ENCODE measurements at regions of chr4 and their contacts with region 1.

Region 1: DNA sequence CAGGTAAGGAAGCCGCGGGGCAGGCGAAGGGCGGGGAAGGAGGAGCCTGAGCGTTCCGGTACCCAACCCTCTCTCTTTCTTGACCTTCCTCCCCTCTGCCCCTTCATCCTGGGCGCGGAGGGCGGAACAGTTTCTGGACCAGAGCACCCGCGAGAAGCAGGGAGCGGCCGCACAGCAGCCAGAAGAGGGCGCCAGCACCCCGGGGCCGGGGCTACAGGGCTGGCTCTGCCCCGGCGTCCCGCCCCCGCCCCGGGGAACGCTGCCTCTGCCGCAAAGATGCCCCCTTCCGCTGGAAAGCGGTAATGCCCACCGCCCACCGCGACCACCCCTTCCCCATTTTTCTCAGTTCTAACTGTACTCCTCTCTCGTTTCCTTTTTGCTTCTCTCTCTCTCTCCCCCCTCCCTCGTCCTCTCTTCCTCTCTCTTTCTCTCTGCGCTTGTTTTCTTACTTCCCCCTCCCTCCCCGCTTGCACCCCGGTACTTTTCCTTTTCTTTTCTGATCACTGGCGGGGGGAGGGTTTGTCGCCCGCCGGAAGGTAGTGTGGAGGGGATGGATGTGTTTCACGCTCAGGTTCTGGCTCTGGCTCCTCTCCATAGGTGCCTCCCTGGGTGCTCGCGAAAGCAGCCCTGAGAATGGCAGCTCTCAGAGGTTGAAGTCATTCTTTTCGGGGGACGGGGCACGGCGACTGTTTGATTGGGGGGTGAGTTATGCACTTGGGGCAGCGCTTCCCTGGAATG is 13.1 kb upstream of the PRDM8 start:
- DNase-seq: peak; percentile 93
- ATAC-seq: peak; percentile 81
- H3K4me3 Mint-ChIP-seq: peak overlapping the region; percentile 97
- H3K27ac Mint-ChIP-seq: peak overlapping the region; percentile 95
- H3K4me1 Mint-ChIP-seq: peaks cover 59% of the 10 kb centered on the region
- H3K27me3 Mint-ChIP-seq: no peaks in the 10 kb centered on the region
- CTCF ChIP-seq: peak; percentile 97

Region 2: DNA sequence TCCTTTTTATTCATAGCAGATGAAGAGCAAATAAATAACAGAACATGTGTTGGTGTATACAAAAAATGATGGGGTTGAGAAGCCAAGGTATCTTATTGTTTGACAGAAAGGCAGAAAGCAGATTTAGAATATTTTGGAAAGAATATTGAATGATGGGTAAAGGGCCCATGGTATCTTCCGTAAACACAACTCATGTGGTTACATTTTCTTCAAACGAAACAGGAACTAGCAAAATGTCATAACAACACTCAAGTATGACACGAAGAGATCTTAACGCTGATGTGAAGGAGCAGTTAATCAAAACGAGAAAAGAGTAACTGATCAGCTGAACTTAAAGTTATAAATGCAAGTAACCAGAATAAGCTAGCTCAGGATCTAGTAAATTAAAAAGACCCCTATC is 580.5 kb before region 1 on chr4:
- CTCF ChIA-PET with region 1: no interaction called
- POLR2A ChIA-PET with region 1: no interaction called
- intact Hi-C with region 1: loop called (anchors 10 kb)
- DNase-seq: no peak
- ATAC-seq: peak; percentile 82
- H3K4me3 Mint-ChIP-seq: peak overlapping the region; percentile 58
- H3K27ac Mint-ChIP-seq: peak overlapping the region; percentile 85
- H3K4me1 Mint-ChIP-seq: peaks cover 52% of the 10 kb centered on the region
- H3K27me3 Mint-ChIP-seq: no peaks in the 10 kb centered on the region
- CTCF ChIP-seq: no peak

Region 3: DNA sequence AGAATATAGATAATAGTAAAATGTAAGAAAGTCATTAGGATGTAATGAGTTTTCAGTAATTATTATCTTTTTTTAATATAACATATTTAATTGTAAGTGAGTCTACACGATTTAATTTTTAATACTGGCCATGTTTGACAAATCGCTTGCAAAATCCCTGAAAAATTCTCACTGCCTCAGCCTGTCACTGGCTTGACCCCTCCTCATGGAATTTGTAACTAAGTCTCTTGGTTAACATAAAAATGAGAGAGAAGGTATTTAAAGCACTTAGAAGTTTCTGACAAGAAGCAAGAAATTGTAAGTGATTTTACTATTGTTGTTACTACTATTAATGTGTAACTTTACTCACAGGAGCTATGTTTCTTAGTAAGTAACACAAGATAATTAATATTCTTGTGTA is 538.3 kb before region 1 on chr4:
- CTCF ChIA-PET with region 1: no interaction called
- POLR2A ChIA-PET with region 1: no interaction called
- intact Hi-C with region 1: no loop called
- DNase-seq: no peak
- ATAC-seq: no peak
- H3K4me3 Mint-ChIP-seq: no peak overlapping the region
- H3K27ac Mint-ChIP-seq: no peak overlapping the region
- H3K4me1 Mint-ChIP-seq: no peaks in the 10 kb centered on the region
- H3K27me3 Mint-ChIP-seq: no peaks in the 10 kb centered on the region
- CTCF ChIP-seq: no peak

Region 4: GRCh38 chr4:80058740-80059139 is 125.5 kb before region 1 on chr4:
- CTCF ChIA-PET with region 1: no interaction called
- POLR2A ChIA-PET with region 1: interaction called, 14 read pairs
- intact Hi-C with region 1: loop called (anchors 1 kb)
- DNase-seq: no peak
- ATAC-seq: peak; percentile 89
- H3K4me3 Mint-ChIP-seq: peak overlapping the region; percentile 79
- H3K27ac Mint-ChIP-seq: peak overlapping the region; percentile 99
- H3K4me1 Mint-ChIP-seq: peaks cover 30% of the 10 kb centered on the region
- H3K27me3 Mint-ChIP-seq: no peaks in the 10 kb centered on the region
- CTCF ChIP-seq: no peak

Region 5: DNA sequence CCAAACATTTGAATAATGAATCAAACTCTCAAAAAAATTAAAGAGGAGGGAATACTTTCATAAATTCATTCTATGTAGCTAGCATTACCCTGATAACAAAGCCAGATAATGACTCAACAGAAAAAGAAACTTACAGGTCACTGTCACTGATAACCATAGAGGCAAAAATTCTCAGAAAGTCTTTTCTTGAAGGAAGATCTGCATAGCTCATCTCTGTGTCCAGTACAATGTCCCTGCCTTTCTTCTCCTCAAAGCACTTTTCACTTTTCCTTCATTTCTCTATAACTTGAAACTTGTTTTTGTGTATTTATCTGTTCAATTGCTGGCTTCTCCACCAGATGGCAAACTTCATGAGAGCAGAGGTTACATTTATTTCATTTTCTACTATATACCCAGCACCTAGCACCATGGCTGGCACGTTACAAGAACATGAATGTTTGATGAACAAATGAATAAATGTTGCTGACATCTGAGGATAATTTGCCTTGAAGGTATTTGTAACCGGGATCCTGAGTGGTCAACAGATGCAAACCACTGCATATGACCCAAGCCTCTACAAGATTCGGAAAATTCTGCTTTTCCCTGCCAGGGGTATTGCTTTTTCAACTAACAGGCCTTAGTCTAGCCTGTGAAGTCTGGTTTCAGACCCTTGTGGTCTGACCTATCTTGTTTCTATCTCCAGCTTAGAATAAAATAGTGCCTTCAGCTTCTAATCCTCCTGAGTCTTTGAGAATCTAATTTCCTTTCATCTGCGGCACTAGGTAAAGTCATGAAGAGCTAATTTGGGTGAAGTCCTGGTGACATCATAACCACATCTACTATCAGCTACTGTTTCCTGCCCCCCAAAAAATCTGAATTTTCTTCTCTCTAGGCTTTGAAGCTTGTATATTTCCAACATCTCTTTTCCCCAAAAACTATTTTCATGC is 58.7 kb before region 1 on chr4:
- CTCF ChIA-PET with region 1: interaction called, 100 read pairs
- POLR2A ChIA-PET with region 1: interaction called, 33 read pairs
- intact Hi-C with region 1: loop called (anchors 1 kb)
- DNase-seq: no peak
- ATAC-seq: peak; percentile 84
- H3K4me3 Mint-ChIP-seq: no peak overlapping the region
- H3K27ac Mint-ChIP-seq: no peak overlapping the region
- H3K4me1 Mint-ChIP-seq: peaks cover 23% of the 10 kb centered on the region
- H3K27me3 Mint-ChIP-seq: no peaks in the 10 kb centered on the region
- CTCF ChIP-seq: no peak

Region 6: GRCh38 chr4:80173401-80173800 is 10.8 kb before region 1 on chr4:
- CTCF ChIA-PET with region 1: interaction called, 65 read pairs
- POLR2A ChIA-PET with region 1: interaction called, 85 read pairs
- intact Hi-C with region 1: loop called (anchors 1 kb)
- DNase-seq: no peak
- ATAC-seq: peak; percentile 91
- H3K4me3 Mint-ChIP-seq: peak overlapping the region; percentile 70
- H3K27ac Mint-ChIP-seq: peak overlapping the region; percentile 96
- H3K4me1 Mint-ChIP-seq: peaks cover 62% of the 10 kb centered on the region
- H3K27me3 Mint-ChIP-seq: no peaks in the 10 kb centered on the region
- CTCF ChIP-seq: no peak

Region 7: GRCh38 chr4:80202190-80202711 is 18.0 kb after region 1 on chr4:
- CTCF ChIA-PET with region 1: interaction called, 66 read pairs
- POLR2A ChIA-PET with region 1: interaction called, 61 read pairs
- intact Hi-C with region 1: loop called (anchors 1 kb)
- DNase-seq: peak; percentile 84
- ATAC-seq: peak; percentile 68
- H3K4me3 Mint-ChIP-seq: peak overlapping the region; percentile 79
- H3K27ac Mint-ChIP-seq: peak overlapping the region; percentile 81
- H3K4me1 Mint-ChIP-seq: peaks cover 23% of the 10 kb centered on the region
- H3K27me3 Mint-ChIP-seq: peaks cover 4% of the 10 kb centered on the region
- CTCF ChIP-seq: no peak

Region 8: GRCh38 chr4:80566203-80566872 is 382.1 kb after region 1 on chr4:
- CTCF ChIA-PET with region 1: no interaction called
- POLR2A ChIA-PET with region 1: no interaction called
- intact Hi-C with region 1: no loop called
- DNase-seq: no peak
- ATAC-seq: no peak
- H3K4me3 Mint-ChIP-seq: no peak overlapping the region
- H3K27ac Mint-ChIP-seq: no peak overlapping the region
- H3K4me1 Mint-ChIP-seq: no peaks in the 10 kb centered on the region
- H3K27me3 Mint-ChIP-seq: peaks cover 4% of the 10 kb centered on the region
- CTCF ChIP-seq: no peak

Measured in activated B cell treated with CpG ODN at 0.5 μM for 24 hours (primary cell).